ENCODE measurements at regions of chr2 and their contacts with region 1.

Region 1: DNA sequence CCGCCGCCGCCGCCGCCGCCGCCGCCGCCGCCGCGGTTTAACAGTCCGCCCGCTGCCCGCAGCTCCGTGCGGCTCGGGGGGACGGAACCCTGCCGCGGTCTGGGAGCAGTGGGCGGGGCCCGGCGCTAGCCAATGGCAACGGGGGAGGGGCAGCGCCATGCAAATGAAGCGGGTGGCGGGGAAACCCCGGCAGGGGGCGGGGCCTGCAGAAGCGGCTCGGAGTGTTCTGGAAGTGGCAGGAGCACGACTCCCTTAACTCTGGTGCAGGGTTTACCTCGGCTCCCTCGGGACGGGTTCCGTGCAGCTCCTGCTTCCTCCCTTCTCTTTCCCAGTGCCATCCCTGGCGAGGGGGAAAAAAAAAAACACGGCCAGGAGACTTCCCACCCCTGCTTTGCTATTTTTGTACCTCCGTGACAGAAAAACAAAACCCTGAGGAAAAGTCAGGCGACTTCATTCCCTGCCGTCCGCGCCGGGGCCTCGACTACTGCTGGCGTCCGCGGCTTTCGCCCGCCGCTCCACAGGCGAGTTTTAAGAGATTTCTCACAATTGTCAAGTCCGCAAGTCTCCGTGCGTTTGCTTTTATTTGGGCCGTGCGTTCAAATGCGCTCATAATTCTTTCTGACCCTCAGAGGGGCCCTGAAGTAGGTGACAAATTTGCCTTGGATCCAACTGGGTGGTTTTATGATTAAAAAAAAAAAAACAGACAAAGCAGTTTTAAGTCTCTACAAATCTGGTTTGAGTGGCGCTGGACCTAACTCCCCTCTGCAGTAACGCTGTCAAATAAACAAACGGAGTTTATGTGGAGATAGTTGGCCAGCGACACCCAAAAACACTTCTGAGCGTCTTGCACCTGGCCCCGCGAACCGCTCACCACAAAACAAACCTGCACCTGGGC is at the start of gene KANSL1L:
- DNase-seq: peak; percentile 95
- H3K4me3 Mint-ChIP-seq: peak within 1 kb of the TSS; percentile 98
- H3K27ac Mint-ChIP-seq: peak within 1 kb of the TSS; percentile 96
- H3K4me1 Mint-ChIP-seq: peaks cover 20% of the 10 kb centered on the region
- H3K27me3 Mint-ChIP-seq: peaks cover 3% of the 10 kb centered on the region
- total RNA-seq, gene KANSL1L: 4.4 to 4.8 TPM

Region 2: GRCh38 chr2:210002158-210003157 is 169.1 kb before region 1 on chr2 and contains the start of gene RPE:
- CTCF ChIA-PET with region 1: no interaction called
- intact Hi-C with region 1: loop called (anchors 1 kb)
- DNase-seq: peak; percentile 98
- H3K4me3 Mint-ChIP-seq: peak within 1 kb of the TSS; percentile 93
- H3K27ac Mint-ChIP-seq: peak within 1 kb of the TSS; percentile 94
- H3K4me1 Mint-ChIP-seq: peaks cover 52% of the 10 kb centered on the region
- H3K27me3 Mint-ChIP-seq: no peaks in the 10 kb centered on the region
- total RNA-seq, gene RPE: 43.9 to 46.2 TPM

Region 3: DNA sequence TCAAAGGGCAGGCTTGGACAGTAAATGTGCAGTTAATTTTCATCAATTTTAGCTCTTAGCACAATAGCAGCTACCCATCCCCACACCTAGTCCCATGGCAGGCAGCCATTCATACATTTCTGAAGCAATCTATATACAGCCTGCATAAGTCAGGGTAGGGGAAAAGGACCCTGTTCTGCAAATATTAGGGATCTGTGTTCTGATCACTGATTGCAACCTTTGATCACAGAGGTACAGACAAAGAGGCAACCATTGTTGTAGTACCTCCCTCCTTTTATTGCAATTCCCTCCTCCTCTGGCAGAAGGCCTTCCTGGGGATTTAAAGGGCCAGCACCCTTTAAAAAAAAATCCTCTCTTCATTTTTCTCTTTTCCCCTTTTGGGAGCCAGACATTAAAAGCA is 58.7 kb before region 1 on chr2:
- CTCF ChIA-PET with region 1: no interaction called
- intact Hi-C with region 1: loop called (anchors 1 kb)
- DNase-seq: no peak
- H3K4me3 Mint-ChIP-seq: no peak overlapping the region
- H3K27ac Mint-ChIP-seq: no peak overlapping the region
- H3K4me1 Mint-ChIP-seq: peaks cover 8% of the 10 kb centered on the region
- H3K27me3 Mint-ChIP-seq: no peaks in the 10 kb centered on the region

Region 4: DNA sequence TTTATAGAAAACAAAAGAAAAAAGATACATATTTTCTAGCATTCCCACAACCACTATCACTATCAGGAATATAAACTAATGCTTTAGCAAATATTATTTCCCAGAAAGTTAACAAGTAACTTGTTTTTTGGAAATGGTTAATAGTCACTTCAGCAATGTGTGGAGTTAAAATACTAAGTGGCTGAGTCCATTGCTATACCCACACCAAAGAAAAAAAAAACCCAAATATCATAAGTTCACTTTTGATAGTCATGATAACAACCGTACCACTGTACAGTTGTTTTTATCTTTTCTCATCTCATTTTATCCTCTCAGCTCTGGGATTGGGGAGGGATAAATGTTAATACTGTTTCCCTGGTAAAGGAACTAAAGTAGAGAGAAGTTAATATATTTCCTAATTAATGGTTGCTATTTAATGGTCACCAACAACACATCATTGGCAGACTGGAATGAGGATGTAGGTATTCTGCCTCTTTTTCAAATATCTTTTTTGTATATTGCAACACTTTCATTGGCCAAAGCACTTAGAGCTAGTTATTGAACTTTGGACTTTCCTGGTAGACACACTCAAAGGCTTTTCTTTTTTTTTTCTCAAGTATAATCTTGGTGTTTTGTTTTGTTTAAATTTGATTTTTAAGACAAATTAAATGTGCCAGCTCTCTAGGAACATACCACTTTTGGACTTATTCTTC is 18.0 kb after region 1 on chr2:
- CTCF ChIA-PET with region 1: no interaction called
- intact Hi-C with region 1: loop called (anchors 2 kb)
- DNase-seq: no peak
- H3K4me3 Mint-ChIP-seq: no peak overlapping the region
- H3K27ac Mint-ChIP-seq: no peak overlapping the region
- H3K4me1 Mint-ChIP-seq: no peaks in the 10 kb centered on the region
- H3K27me3 Mint-ChIP-seq: no peaks in the 10 kb centered on the region

Region 5: GRCh38 chr2:210476194-210477128 is 304.9 kb after region 1 on chr2 and contains the start of gene LANCL1:
- CTCF ChIA-PET with region 1: no interaction called
- intact Hi-C with region 1: loop called (anchors 1 kb)
- DNase-seq: peak; percentile 91
- H3K4me3 Mint-ChIP-seq: peak within 1 kb of the TSS; percentile 98
- H3K27ac Mint-ChIP-seq: peak within 1 kb of the TSS; percentile 98
- H3K4me1 Mint-ChIP-seq: peaks cover 46% of the 10 kb centered on the region
- H3K27me3 Mint-ChIP-seq: no peaks in the 10 kb centered on the region
- total RNA-seq, gene LANCL1: 46.1 to 47.5 TPM

Measured in activated naive CD4-positive, alpha-beta T cell treated with anti-CD3 and anti-CD28 coated beads for 36 hours (primary cell).